CD4-positive, alpha-beta memory T cell (primary cell): ENCODE measurements at regions of chr6 and their contacts with region 1.

Region 1: GRCh38 chr6:41318654-41319565 is 16.5 kb upstream of the NCR2 start:
- DNase-seq: peak; percentile 76 to 82 (median 81)
- H3K4me3 ChIP-seq: peak overlapping the region in 1 of 2 donors; percentile 8
- H3K4me3 Mint-ChIP-seq: peak overlapping the region in 7 of 8 donors; percentile 12 to 72 (median 67)
- H3K27ac ChIP-seq: no peak overlapping the region
- H3K27ac Mint-ChIP-seq: peak overlapping the region in 3 of 7 donors; percentile 27 to 87 (median 71)
- H3K4me1 ChIP-seq: peaks cover 7% of the 10 kb centered on the region
- H3K4me1 Mint-ChIP-seq: peaks cover 2 to 19% (median 10%) of the 10 kb centered on the region in 4 donors
- H3K27me3 ChIP-seq: no peaks in the 10 kb centered on the region
- H3K27me3 Mint-ChIP-seq: peaks cover 5 to 14% of the 10 kb centered on the region in 2 donors

Region 2: GRCh38 chr6:39347906-39348585 is 1970.9 kb before region 1 on chr6:
- CTCF ChIA-PET with region 1: no interaction called
- POLR2A ChIA-PET with region 1: no interaction called
- intact Hi-C with region 1: loop called (anchors 2 kb)
- DNase-seq: peak in 3 of 5 donors; percentile 26 to 33 (median 32)
- H3K4me3 ChIP-seq: no peak overlapping the region
- H3K4me3 Mint-ChIP-seq: no peak overlapping the region
- H3K27ac ChIP-seq: no peak overlapping the region
- H3K27ac Mint-ChIP-seq: no peak overlapping the region
- H3K4me1 ChIP-seq: no peaks in the 10 kb centered on the region
- H3K4me1 Mint-ChIP-seq: peaks cover 0 to 4% (median 0%) of the 10 kb centered on the region in 4 donors
- H3K27me3 ChIP-seq: no peaks in the 10 kb centered on the region
- H3K27me3 Mint-ChIP-seq: peaks cover 3 to 6% of the 10 kb centered on the region in 2 donors

Region 3: GRCh38 chr6:41092421-41093140 is 226.3 kb before region 1 on chr6:
- CTCF ChIA-PET with region 1: no interaction called
- POLR2A ChIA-PET with region 1: no interaction called
- intact Hi-C with region 1: loop called (anchors 2 kb)
- DNase-seq: peak in 1 of 5 donors; percentile 9
- H3K4me3 ChIP-seq: no peak overlapping the region
- H3K4me3 Mint-ChIP-seq: no peak overlapping the region
- H3K27ac ChIP-seq: no peak overlapping the region
- H3K27ac Mint-ChIP-seq: peak overlapping the region in 1 of 7 donors; percentile 25
- H3K4me1 ChIP-seq: no peaks in the 10 kb centered on the region
- H3K4me1 Mint-ChIP-seq: peaks cover 0 to 12% (median 4%) of the 10 kb centered on the region in 4 donors
- H3K27me3 ChIP-seq: no peaks in the 10 kb centered on the region
- H3K27me3 Mint-ChIP-seq: no peaks in the 10 kb centered on the region

Region 4: DNA sequence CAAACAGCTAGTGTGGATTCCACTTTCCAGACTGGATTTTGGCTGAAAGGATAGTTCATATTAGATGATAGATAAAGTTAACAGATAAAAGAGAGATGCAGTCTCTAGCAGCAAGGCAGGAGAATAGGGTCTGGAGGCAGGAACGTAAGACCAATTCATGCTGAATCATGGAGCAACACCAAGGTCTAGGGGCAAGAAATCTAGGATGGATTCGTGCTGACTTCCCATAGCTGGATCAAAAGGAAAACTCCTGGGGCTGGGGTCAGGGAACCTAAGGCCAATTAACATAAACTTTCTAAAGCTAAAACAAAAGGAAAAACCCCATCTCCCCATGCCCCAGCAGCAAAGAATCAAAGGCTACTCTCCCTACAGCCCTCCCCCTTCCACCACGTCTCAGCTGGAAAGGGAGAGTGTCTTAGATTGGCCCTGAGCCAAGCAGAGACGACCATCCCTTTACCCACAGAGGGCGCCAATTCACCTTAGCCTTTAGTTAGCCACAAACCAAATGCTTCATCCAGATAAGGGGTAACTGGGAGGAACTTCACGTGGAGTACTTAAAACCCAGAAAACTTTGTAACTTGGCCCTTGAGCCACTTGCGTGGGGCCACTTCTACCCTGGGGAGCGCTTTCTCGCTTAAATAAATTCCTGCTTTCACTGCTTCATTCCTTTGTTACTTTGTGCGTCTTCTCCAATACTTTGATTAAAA is 40.1 kb before region 1 on chr6:
- CTCF ChIA-PET with region 1: interaction called, 14 read pairs
- POLR2A ChIA-PET with region 1: no interaction called
- intact Hi-C with region 1: loop called (anchors 1 kb)
- DNase-seq: peak; percentile 55 to 67 (median 60)
- H3K4me3 ChIP-seq: no peak overlapping the region
- H3K4me3 Mint-ChIP-seq: no peak overlapping the region
- H3K27ac ChIP-seq: no peak overlapping the region
- H3K27ac Mint-ChIP-seq: peak overlapping the region in 2 of 7 donors; percentile 32 to 59
- H3K4me1 ChIP-seq: peaks cover 10% of the 10 kb centered on the region
- H3K4me1 Mint-ChIP-seq: peaks cover 4 to 9% (median 8%) of the 10 kb centered on the region in 4 donors
- H3K27me3 ChIP-seq: no peaks in the 10 kb centered on the region
- H3K27me3 Mint-ChIP-seq: peaks cover 10% of the 10 kb centered on the region in 2 donors

Region 5: GRCh38 chr6:41306187-41306854 is 12.6 kb before region 1 on chr6:
- CTCF ChIA-PET with region 1: interaction called, 135 read pairs
- POLR2A ChIA-PET with region 1: no interaction called
- intact Hi-C with region 1: loop called (anchors 1 kb)
- DNase-seq: peak in 4 of 5 donors; percentile 31 to 43 (median 36)
- H3K4me3 ChIP-seq: no peak overlapping the region
- H3K4me3 Mint-ChIP-seq: no peak overlapping the region
- H3K27ac ChIP-seq: no peak overlapping the region
- H3K27ac Mint-ChIP-seq: no peak overlapping the region
- H3K4me1 ChIP-seq: no peaks in the 10 kb centered on the region
- H3K4me1 Mint-ChIP-seq: peaks cover 0 to 4% (median under 1%) of the 10 kb centered on the region in 4 donors
- H3K27me3 ChIP-seq: peaks cover 3% of the 10 kb centered on the region
- H3K27me3 Mint-ChIP-seq: peaks cover 6 to 17% of the 10 kb centered on the region in 2 donors

Region 6: DNA sequence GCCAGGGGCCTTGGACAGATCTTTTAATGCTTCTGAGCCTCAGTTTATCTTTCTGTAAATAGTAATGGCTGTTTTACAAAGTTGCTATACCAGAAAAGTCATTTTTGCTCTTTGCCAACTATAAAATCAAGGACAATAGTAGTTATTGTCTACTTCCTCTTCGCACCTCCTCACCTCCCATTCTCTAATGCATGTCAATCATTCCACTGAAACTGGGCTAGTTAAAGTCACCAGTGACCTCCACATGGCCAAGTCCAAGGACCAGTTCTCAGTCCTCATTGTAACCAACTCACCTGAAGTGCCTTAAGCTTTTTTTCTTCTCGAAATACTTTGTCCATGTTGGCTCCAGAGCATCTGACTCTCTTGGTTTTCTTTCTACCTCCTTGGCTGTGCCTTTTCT is 67.7 kb after region 1 on chr6:
- CTCF ChIA-PET with region 1: no interaction called
- POLR2A ChIA-PET with region 1: no interaction called
- intact Hi-C with region 1: no loop called
- DNase-seq: no peak
- H3K4me3 ChIP-seq: no peak overlapping the region
- H3K4me3 Mint-ChIP-seq: no peak overlapping the region
- H3K27ac ChIP-seq: no peak overlapping the region
- H3K27ac Mint-ChIP-seq: no peak overlapping the region
- H3K4me1 ChIP-seq: no peaks in the 10 kb centered on the region
- H3K4me1 Mint-ChIP-seq: no peaks in the 10 kb centered on the region
- H3K27me3 ChIP-seq: peaks cover 11% of the 10 kb centered on the region
- H3K27me3 Mint-ChIP-seq: peaks cover 11 to 19% of the 10 kb centered on the region in 2 donors

Region 7: GRCh38 chr6:41605649-41606195 is 286.8 kb after region 1 on chr6:
- CTCF ChIA-PET with region 1: no interaction called
- POLR2A ChIA-PET with region 1: no interaction called
- intact Hi-C with region 1: no loop called
- DNase-seq: no peak
- H3K4me3 ChIP-seq: no peak overlapping the region
- H3K4me3 Mint-ChIP-seq: no peak overlapping the region
- H3K27ac ChIP-seq: no peak overlapping the region
- H3K27ac Mint-ChIP-seq: no peak overlapping the region
- H3K4me1 ChIP-seq: peaks cover 11% of the 10 kb centered on the region
- H3K4me1 Mint-ChIP-seq: peaks cover 0 to 7% (median 5%) of the 10 kb centered on the region in 4 donors
- H3K27me3 ChIP-seq: peaks cover 3% of the 10 kb centered on the region
- H3K27me3 Mint-ChIP-seq: peaks cover 4 to 7% of the 10 kb centered on the region in 2 donors